A673 (cell line): ENCODE measurements at regions of chr5 and their contacts with region 1.

Region 1: GRCh38 chr5:79560771-79561524 is 47.0 kb upstream of the HOMER1 start:
- DNase-seq: no peak
- H3K4me3 ChIP-seq: no peak overlapping the region
- H3K27ac ChIP-seq: no peak overlapping the region
- H3K4me1 ChIP-seq: peaks cover 26% of the 10 kb centered on the region
- H3K27me3 ChIP-seq: peaks cover 69% of the 10 kb centered on the region
- CTCF ChIP-seq: no peak

Region 2: DNA sequence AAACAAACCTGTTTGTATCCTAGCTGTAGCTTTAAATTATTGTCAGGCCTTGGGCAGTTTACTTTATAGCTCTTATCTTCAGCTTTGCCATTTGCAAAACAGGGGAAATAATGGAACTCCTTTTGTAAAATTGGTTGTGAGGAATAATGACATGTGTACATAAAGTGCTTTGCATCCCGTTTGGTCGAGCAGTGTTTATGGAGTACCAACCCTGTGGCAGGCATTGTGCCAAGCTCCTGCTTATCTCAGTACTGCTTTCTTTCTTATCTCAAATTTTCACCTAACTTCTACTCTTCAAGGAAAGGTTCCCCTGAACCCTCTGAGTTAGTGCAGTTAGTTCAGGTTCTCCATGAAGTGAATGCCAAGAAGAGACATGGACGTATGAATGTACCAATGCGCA is 41.9 kb after region 1 on chr5:
- CTCF ChIA-PET with region 1: no interaction called
- POLR2A ChIA-PET with region 1: no interaction called
- intact Hi-C with region 1: no loop called
- DNase-seq: no peak
- H3K4me3 ChIP-seq: no peak overlapping the region
- H3K27ac ChIP-seq: no peak overlapping the region
- H3K4me1 ChIP-seq: no peaks in the 10 kb centered on the region
- H3K27me3 ChIP-seq: peaks cover 5% of the 10 kb centered on the region
- CTCF ChIP-seq: no peak

Region 3: GRCh38 chr5:79774171-79774854 is 213.4 kb after region 1 on chr5:
- CTCF ChIA-PET with region 1: no interaction called
- POLR2A ChIA-PET with region 1: no interaction called
- intact Hi-C with region 1: loop called (anchors 5 kb)
- DNase-seq: peak; percentile 81
- H3K4me3 ChIP-seq: peak overlapping the region; percentile 0
- H3K27ac ChIP-seq: no peak overlapping the region
- H3K4me1 ChIP-seq: peaks cover 15% of the 10 kb centered on the region
- H3K27me3 ChIP-seq: no peaks in the 10 kb centered on the region
- CTCF ChIP-seq: peak; percentile 56

Region 4: GRCh38 chr5:79837761-79838605 is 277.0 kb after region 1 on chr5:
- CTCF ChIA-PET with region 1: no interaction called
- POLR2A ChIA-PET with region 1: no interaction called
- intact Hi-C with region 1: no loop called
- DNase-seq: no peak
- H3K4me3 ChIP-seq: no peak overlapping the region
- H3K27ac ChIP-seq: no peak overlapping the region
- H3K4me1 ChIP-seq: no peaks in the 10 kb centered on the region
- H3K27me3 ChIP-seq: no peaks in the 10 kb centered on the region
- CTCF ChIP-seq: no peak

Region 5: DNA sequence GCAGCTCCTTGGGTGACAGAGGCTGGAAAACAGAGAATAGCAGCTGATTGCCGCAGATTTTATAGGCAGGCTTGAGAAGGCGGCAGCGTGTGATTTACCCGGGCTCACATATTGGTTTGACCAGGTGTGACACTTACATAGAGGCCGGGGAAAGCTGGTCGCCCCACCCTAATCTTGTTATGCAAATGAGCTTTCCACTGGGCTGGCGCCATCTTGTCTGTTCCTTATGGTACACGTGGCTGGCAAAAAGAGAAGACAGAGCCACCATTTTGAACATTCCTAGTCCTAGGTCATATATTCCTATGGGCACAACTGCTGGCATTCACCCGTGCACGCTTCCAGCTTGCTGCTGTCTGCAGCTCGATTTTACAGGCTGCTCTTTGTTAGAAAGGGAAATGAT is 747.6 kb after region 1 on chr5:
- CTCF ChIA-PET with region 1: no interaction called
- POLR2A ChIA-PET with region 1: no interaction called
- intact Hi-C with region 1: no loop called
- DNase-seq: no peak
- H3K4me3 ChIP-seq: no peak overlapping the region
- H3K27ac ChIP-seq: no peak overlapping the region
- H3K4me1 ChIP-seq: no peaks in the 10 kb centered on the region
- H3K27me3 ChIP-seq: no peaks in the 10 kb centered on the region
- CTCF ChIP-seq: no peak